Motor neuron (in vitro differentiated cells): ENCODE measurements at regions of chr6 and their contacts with region 1.

Region 1: DNA sequence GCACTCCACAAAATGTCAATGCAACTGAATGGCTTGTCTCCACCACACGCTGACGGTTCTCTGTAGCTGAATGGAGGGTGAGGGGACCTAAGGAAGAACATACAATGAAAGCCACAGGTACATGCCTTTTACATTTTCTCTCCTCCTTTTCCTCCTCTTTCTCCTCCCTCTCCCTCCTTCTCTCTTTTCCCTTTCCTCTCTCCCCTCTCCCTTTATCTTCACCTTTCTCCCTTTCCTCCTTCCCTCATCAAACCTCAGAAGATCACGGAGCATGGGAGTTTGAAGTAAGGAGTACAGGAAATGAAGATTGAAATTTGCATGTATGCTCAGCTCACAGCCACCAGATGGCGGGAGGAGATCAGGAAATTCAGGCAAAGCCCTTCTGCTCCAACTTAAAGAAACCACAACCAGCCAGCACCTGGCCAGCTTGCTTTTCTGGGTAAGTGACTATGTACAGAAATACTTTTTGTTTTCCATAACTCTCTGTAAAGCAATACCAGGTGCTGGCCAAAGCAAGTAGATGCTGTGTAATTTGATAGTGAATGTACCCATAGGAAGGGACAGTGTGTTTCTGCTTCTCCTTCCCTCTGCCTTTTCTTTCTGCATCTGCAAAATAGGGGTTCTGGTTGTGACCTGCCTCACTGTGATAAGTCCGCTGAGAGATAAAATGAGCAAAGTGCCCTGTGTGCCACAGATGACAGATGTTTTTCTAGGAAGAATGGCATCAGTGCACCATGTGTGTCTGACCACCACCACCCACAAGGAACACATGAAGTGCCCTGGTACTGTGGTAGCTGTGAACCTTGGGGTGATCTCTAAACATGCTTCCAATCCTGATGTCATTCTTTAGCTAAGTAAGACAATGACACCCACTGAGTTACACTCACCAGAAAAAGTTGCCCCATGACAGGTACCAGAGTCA is 18.6 kb upstream of the FOXO3 start:
- ATAC-seq: peak; percentile 71 to 96 (median 80)
- H3K4me3 ChIP-seq: no peak overlapping the region
- H3K27ac ChIP-seq: no peak overlapping the region
- H3K4me1 ChIP-seq: no peaks in the 10 kb centered on the region

Region 2: DNA sequence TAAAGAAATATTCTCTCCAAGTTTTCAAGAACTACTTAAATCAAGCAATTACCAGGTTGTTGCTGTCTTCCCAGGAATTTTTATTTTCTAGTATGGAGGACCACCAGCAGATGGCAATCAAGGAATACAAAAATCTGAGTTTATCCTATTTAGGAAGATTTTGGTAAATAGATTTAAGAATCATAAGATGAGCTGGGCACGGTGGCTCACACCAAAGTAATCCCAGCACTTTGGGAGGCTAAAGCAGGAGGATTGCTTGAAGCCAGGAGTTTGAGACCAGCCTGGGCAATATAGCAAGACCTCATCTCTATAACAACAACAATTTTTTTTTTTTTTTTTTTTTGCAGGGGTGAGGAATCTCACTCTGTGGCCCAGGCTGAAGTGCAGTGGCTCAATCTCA is 564.8 kb before region 1 on chr6:
- in situ Hi-C with region 1: loop called in 2 of 9 experiments (anchors 25 kb)
- ATAC-seq: peak in 1 of 8 experiments; percentile 26
- H3K4me3 ChIP-seq: no peak overlapping the region
- H3K27ac ChIP-seq: no peak overlapping the region
- H3K4me1 ChIP-seq: no peaks in the 10 kb centered on the region

Region 3: DNA sequence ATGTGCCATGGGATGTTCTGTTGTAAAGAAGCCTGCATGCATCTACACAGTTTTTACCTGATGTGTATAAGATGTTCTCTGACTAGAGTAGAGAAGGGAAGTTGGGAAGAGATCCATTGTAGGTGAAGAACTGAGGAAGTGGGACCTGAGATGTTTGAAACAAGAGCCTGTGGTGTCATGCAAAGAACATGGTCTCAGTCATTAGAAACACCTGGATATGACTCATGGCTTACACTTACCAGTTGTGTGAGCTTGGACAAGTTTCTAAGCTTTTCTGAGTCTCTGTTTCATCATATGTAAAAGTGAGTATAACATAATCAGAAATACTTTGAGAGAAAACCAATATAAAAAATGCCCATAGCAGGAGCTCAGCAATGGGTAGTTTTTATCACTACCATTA is 532.2 kb before region 1 on chr6:
- in situ Hi-C with region 1: no loop called
- ATAC-seq: no peak
- H3K4me3 ChIP-seq: no peak overlapping the region
- H3K27ac ChIP-seq: no peak overlapping the region
- H3K4me1 ChIP-seq: no peaks in the 10 kb centered on the region

Region 4: DNA sequence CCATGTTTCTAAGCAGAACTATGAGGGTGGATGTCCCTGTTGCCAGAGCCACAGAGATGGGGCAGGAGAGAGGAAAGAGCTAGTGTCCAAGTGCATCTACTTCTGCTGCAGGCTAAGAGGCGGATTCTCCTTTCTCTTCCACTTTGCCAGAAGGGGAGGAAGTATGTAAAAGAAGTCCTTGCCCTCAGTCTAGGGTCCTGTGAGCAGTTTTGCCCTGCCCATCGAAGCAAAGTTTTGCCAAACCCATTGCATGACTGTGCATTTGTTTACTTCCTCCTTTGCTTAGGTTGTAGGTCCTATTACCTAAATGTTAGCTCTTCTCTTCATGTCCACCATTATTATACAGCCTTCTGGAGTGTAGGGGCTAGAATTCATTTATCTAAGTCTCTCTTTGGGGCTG is 199.9 kb after region 1 on chr6:
- in situ Hi-C with region 1: no loop called
- ATAC-seq: peak in 2 of 8 experiments; percentile 30 to 67
- H3K4me3 ChIP-seq: no peak overlapping the region
- H3K27ac ChIP-seq: no peak overlapping the region
- H3K4me1 ChIP-seq: peaks cover 0 to 8% of the 10 kb centered on the region in 2 donors

Region 5: DNA sequence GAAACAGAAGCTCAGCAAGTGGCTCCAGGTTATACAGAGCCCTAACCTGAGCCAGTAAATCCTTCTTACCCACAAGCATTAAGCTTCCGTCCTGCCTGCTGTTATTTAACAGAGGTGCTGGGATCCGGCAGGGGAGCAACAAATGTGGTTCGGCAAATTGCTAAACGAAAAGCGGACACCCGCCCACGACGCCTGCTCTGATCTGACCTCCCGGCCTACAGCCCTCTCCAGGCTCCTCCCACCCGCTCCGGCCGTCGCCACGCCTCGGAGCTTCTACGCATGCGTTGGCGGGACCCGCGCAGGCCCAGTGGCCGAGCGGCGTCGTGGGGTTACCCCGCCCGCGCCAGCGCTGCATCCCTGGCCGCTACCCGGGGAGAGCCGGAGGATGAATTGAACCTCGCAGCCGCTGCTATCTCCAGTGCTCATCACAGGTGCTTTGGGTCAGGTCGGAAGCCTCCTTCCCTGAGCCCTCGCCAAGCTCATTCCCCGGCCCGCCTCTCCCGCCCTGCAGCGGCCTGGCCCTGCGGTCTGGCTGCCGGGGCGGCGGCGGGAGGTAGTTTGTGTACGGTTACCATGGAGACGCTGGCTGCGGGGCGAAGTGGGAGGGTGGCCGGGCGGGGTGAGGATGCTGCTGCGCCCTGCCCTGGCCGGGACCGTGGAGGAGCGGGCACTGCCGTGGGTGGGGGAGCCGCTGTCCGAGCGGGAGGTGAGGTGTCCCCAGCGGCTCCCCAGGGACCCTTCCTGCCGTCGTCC is 306.2 kb after region 1 on chr6 and contains the start of gene ARMC2:
- in situ Hi-C with region 1: loop called in 4 of 9 experiments (anchors 25 kb)
- ATAC-seq: peak; percentile 88 to 97 (median 92)
- H3K4me3 ChIP-seq: peak within 1 kb of the TSS; percentile 61 to 97 (median 82)
- H3K27ac ChIP-seq: peak within 1 kb of the TSS; percentile 64 to 71
- H3K4me1 ChIP-seq: peaks cover 6 to 8% of the 10 kb centered on the region in 2 donors
- total RNA-seq, gene ARMC2: 1.1 to 22.4 (median 6.1) TPM

Region 6: DNA sequence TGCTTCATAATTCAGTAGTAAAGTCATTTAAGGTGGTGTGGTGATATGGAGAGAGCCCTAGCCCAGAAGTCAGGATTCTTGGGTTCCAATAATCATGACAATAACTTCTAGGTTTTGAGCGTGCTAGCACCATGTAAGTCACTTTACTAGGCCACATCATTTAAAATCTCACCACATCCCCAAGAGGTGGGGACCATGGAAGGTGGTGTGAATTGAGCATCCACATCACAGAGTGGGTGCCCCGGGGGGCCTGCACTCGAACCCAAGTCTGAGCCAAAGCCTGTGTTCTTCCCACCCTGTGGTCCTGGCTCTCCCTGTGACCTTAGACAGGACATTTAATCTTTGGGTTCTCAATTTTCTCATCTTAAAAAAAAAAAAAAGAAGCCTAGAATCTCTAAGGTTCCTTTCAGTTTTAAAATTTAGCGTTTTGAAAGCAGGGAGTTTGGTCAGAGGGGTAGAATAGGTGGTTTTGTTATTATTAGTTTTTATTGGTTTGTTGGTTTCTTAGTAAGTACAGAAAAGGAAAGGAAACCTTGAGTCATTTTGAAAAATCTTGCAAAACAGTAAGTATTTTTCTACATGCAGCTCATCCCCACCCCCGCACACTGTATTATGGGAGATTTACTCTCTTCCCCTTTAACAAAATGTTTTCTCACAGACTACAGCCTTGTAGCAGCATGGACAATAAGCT is 332.5 kb after region 1 on chr6:
- in situ Hi-C with region 1: loop called in 3 of 9 experiments (anchors 25 kb)
- ATAC-seq: no peak
- H3K4me3 ChIP-seq: no peak overlapping the region
- H3K27ac ChIP-seq: no peak overlapping the region
- H3K4me1 ChIP-seq: no peaks in the 10 kb centered on the region

Region 7: GRCh38 chr6:109073344-109074132 is 531.4 kb after region 1 on chr6:
- in situ Hi-C with region 1: loop called in 8 of 9 experiments (anchors 10 to 25 kb)
- ATAC-seq: peak in 7 of 8 experiments; percentile 27 to 60 (median 36)
- H3K4me3 ChIP-seq: no peak overlapping the region
- H3K27ac ChIP-seq: no peak overlapping the region
- H3K4me1 ChIP-seq: no peaks in the 10 kb centered on the region

Region 8: GRCh38 chr6:109095027-109095834 is 553.1 kb after region 1 on chr6 and contains the start of gene CEP57L1:
- in situ Hi-C with region 1: loop called in 1 of 9 experiments (anchors 25 kb)
- ATAC-seq: peak; percentile 56 to 86 (median 74)
- H3K4me3 ChIP-seq: peak within 1 kb of the TSS; percentile 65 to 90 (median 78)
- H3K27ac ChIP-seq: peak within 1 kb of the TSS; percentile 89 to 92
- H3K4me1 ChIP-seq: peaks cover 0 to 12% of the 10 kb centered on the region in 2 donors
- total RNA-seq, gene CEP57L1: 12.1 to 31.6 (median 26.0) TPM

Region 9: DNA sequence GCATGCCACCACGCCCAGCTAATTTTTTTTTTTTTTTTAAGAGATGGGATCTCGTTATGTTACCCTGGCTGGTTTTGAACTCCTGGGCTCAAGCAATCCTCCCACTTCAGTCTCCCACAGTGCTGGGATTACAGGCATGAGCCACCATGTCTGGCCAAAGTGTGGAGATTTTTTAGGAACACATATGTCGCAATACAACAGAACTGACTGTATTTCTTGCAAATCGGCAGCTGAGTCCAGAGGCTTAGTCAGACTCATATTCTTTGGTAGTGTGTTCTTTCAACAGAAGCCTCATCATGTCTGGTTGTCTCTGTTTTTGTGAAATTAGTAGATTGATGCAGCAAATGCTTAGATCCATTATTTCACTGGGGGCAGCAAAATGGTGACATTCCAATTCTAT is 864.1 kb after region 1 on chr6:
- in situ Hi-C with region 1: loop called in 1 of 9 experiments (anchors 25 kb)
- ATAC-seq: peak in 2 of 8 experiments; percentile 52 to 81
- H3K4me3 ChIP-seq: no peak overlapping the region
- H3K27ac ChIP-seq: no peak overlapping the region
- H3K4me1 ChIP-seq: no peaks in the 10 kb centered on the region